T-cell (primary cell): ENCODE measurements at regions of chr20 and their contacts with region 1.

Region 1: DNA sequence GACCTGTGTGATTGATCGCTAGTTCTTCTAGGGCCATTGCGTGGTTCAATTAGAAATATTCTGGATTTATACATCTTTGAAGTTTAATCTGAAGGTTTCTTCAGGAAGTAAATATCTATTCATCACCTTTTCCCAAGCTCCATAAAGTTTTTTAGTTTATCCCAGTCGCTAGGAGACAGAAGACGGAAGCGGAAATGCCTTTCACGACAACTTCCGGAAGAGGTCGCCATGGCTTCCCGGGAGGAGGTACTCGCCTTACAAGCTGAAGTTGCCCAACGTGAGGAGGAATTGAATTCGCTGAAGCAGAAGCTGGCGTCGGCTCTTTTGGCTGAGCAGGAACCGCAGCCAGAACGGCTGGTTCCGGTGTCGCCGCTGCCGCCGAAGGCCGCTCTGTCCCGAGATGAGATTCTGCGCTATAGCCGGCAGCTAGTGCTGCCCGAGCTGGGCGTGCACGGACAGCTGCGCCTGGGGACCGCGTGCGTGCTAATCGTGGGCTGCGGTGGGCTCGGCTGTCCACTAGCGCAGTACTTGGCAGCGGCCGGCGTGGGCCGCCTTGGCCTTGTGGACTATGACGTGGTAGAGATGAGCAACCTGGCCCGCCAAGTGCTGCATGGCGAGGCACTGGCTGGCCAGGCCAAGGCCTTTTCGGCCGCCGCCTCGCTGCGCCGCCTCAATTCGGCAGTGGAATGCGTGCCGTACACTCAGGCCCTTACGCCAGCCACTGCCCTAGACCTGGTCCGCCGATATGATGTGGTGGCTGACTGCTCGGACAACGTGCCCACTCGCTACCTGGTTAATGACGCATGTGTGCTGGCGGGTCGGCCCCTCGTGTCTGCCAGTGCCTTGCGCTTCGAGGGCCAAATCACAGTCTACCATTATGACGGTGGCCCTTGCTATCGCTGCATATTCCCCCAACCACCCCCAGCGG is at the start of gene MOCS3:
- DNase-seq: peak; percentile 58 to 93 (median 82)
- ATAC-seq: peak; percentile 80 to 86 (median 83)
- H3K4me3 ChIP-seq: peak within 1 kb of the TSS; percentile 91 to 95
- H3K4me3 Mint-ChIP-seq: peak within 1 kb of the TSS; percentile 94 to 96 (median 95)
- H3K27ac ChIP-seq: peak within 1 kb of the TSS; percentile 95
- H3K27ac Mint-ChIP-seq: peak within 1 kb of the TSS; percentile 99
- H3K4me1 ChIP-seq: peaks cover 23 to 24% of the 10 kb centered on the region in 2 experiments
- H3K4me1 Mint-ChIP-seq: peaks cover 61 to 67% (median 63%) of the 10 kb centered on the region in 3 donors
- H3K27me3 ChIP-seq: no peaks in the 10 kb centered on the region
- H3K27me3 Mint-ChIP-seq: no peaks in the 10 kb centered on the region
- total RNA-seq, gene MOCS3: 2.6 to 8.3 (median 7.6) TPM

Region 2: DNA sequence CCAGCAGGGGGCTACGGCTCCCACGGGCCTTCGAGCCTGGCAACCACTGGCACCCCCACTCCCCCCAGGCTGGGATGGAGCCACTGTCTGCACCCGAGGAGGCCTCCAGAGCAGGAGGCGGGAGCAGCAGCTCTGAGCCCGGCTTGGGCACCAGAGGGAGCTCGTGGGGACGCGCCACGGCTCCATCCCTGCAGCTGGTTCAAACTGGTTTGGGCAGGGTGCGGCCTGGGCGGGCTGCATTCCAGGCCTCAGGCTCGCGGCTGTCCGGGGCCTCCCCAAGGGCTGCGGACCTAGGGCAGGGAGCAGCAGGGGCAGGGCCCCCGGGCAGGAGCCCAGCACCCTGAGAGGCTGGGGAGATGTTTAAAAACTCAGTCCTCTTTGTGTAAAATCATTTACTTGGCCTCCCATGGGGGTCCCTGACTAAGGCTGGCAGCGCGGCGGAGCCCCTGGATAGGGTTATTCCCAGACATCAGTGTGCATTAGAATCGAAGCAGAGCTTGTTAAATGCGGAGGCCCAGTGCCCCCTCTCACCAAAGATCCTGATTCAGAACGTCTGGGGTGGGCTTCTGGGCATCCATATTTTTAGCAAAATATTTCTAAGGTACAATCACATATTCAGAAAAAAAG is 168.1 kb before region 1 on chr20:
- CTCF ChIA-PET with region 1: interaction called in 1 of 2 experiments, 21 read pairs
- POLR2A ChIA-PET with region 1: interaction called in 1 of 2 experiments, 5 read pairs
- DNase-seq: peak; percentile 43 to 84 (median 67)
- ATAC-seq: peak; percentile 59 to 69 (median 62)
- H3K4me3 ChIP-seq: peak overlapping the region in 1 of 2 donors; percentile 35
- H3K4me3 Mint-ChIP-seq: peak overlapping the region in 1 of 3 donors; percentile 30
- H3K27ac ChIP-seq: peak overlapping the region; percentile 93
- H3K27ac Mint-ChIP-seq: peak overlapping the region; percentile 86 to 91
- H3K4me1 ChIP-seq: peaks cover 2 to 21% of the 10 kb centered on the region in 2 experiments
- H3K4me1 Mint-ChIP-seq: peaks cover 8 to 15% (median 11%) of the 10 kb centered on the region in 3 donors
- H3K27me3 ChIP-seq: peaks cover 0 to under 1% of the 10 kb centered on the region in 2 experiments
- H3K27me3 Mint-ChIP-seq: no peaks in the 10 kb centered on the region

Region 3: GRCh38 chr20:50987592-50988210 is 28.8 kb after region 1 on chr20:
- CTCF ChIA-PET with region 1: no interaction called
- POLR2A ChIA-PET with region 1: no interaction called
- DNase-seq: peak in 34 of 35 experiments; percentile 10 to 87 (median 42)
- ATAC-seq: peak; percentile 83 to 95 (median 88)
- H3K4me3 ChIP-seq: no peak overlapping the region
- H3K4me3 Mint-ChIP-seq: no peak overlapping the region
- H3K27ac ChIP-seq: no peak overlapping the region
- H3K27ac Mint-ChIP-seq: no peak overlapping the region
- H3K4me1 ChIP-seq: no peaks in the 10 kb centered on the region
- H3K4me1 Mint-ChIP-seq: peaks cover 0 to 2% (median 2%) of the 10 kb centered on the region in 3 donors
- H3K27me3 ChIP-seq: peaks cover 4 to 34% of the 10 kb centered on the region in 2 experiments
- H3K27me3 Mint-ChIP-seq: peaks cover 22 to 37% of the 10 kb centered on the region in 2 donors